ENCODE measurements at regions of chr6 and their contacts with region 1.

Region 1: DNA sequence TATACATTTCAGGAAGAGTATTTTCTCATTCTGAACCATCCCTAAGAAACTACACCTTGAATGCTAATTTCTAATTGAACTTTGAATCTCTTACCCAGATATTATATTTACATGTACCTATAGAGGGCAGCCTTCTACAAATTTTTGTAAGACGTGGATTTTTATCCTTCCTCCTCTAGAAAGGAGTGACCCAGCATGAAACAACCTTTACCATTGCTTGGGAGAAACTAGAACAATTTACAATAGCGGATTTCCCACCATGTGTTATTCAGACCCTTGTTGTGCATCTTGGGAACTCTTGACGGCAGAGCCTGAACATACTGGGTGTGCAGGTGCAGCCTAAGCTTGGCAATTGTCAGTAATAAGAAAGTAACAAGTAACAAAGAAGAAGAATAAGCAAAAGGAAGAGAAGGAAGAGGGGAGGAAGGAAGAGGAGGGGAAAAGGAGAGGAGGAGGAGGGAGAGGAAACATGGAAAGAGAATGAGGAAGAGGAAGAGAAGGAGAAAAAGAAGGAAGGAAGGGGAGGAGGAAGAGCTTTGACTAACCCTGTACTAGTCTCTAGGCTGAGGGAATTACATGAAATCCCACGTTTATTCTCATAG is 10.8 kb upstream of the TAAR1 start:
- DNase-seq: peak in 1 of 2 donors; percentile 46
- ATAC-seq: peak; percentile 47 to 59 (median 50)
- H3K4me3 ChIP-seq: no peak overlapping the region
- H3K4me3 Mint-ChIP-seq: peak overlapping the region; percentile 17
- H3K27ac ChIP-seq: no peak overlapping the region
- H3K27ac Mint-ChIP-seq: no peak overlapping the region
- H3K4me1 ChIP-seq: peaks cover 10% of the 10 kb centered on the region
- H3K4me1 Mint-ChIP-seq: peaks cover 12 to 17% of the 10 kb centered on the region in 2 donors
- H3K27me3 ChIP-seq: no peaks in the 10 kb centered on the region
- H3K27me3 Mint-ChIP-seq: peaks cover 0 to 3% of the 10 kb centered on the region in 2 donors
- CTCF ChIP-seq: peak; percentile 66

Region 2: GRCh38 chr6:132768051-132768517 is 98.3 kb after region 1 on chr6:
- intact Hi-C with region 1: loop called (anchors 1 kb)
- DNase-seq: peak; percentile 21 to 38
- ATAC-seq: peak; percentile 70 to 84 (median 84)
- H3K4me3 ChIP-seq: no peak overlapping the region
- H3K4me3 Mint-ChIP-seq: no peak overlapping the region
- H3K27ac ChIP-seq: no peak overlapping the region
- H3K27ac Mint-ChIP-seq: no peak overlapping the region
- H3K4me1 ChIP-seq: peaks cover 16% of the 10 kb centered on the region
- H3K4me1 Mint-ChIP-seq: peaks cover 14 to 17% of the 10 kb centered on the region in 2 donors
- H3K27me3 ChIP-seq: no peaks in the 10 kb centered on the region
- H3K27me3 Mint-ChIP-seq: peaks cover 0 to 2% of the 10 kb centered on the region in 2 donors
- CTCF ChIP-seq: peak; percentile 48

Region 3: DNA sequence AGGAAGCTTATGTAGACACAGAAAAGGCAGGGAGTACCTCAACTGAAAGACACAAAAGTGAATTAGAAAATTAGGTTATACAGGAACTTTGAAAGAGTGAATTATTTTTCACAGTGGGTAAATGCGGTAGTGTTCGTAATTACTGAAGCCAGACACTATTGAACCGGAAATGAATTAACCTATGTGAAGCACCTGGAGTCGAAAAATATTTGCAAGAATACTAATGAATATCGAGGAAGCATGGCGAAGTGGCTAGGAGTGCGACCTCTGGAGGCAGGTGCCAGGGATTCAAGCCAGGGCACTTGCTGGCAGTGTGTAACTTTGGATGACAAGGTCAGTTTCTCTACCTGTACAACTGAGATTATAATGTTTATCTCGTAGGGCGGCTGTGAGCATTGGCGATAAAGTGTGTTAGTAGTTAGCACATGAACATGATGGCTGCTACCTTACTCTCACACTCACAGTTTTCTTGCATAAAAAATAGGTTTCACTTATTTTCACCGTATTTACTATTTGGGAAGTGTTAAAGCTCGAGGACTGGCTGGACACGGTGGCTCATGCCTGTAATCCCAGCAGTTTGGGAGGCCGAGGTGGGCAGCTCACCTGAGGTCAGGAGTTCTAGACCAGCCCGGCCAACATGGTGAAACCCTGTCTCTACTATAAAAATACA is 129.2 kb after region 1 on chr6:
- intact Hi-C with region 1: loop called (anchors 10 kb)
- DNase-seq: peak; percentile 36 to 86
- ATAC-seq: peak; percentile 86
- H3K4me3 ChIP-seq: peak overlapping the region; percentile 82
- H3K4me3 Mint-ChIP-seq: no peak overlapping the region
- H3K27ac ChIP-seq: peak overlapping the region; percentile 70
- H3K27ac Mint-ChIP-seq: no peak overlapping the region
- H3K4me1 ChIP-seq: no peaks in the 10 kb centered on the region
- H3K4me1 Mint-ChIP-seq: peaks cover 10 to 16% of the 10 kb centered on the region in 2 donors
- H3K27me3 ChIP-seq: peaks cover 2% of the 10 kb centered on the region
- H3K27me3 Mint-ChIP-seq: peaks cover 0 to 2% of the 10 kb centered on the region in 2 donors
- CTCF ChIP-seq: peak; percentile 72